Upper lobe of right lung (tissue), 1 donor: ENCODE measurements at regions of chr6 and their contacts with region 1.

Region 1: DNA sequence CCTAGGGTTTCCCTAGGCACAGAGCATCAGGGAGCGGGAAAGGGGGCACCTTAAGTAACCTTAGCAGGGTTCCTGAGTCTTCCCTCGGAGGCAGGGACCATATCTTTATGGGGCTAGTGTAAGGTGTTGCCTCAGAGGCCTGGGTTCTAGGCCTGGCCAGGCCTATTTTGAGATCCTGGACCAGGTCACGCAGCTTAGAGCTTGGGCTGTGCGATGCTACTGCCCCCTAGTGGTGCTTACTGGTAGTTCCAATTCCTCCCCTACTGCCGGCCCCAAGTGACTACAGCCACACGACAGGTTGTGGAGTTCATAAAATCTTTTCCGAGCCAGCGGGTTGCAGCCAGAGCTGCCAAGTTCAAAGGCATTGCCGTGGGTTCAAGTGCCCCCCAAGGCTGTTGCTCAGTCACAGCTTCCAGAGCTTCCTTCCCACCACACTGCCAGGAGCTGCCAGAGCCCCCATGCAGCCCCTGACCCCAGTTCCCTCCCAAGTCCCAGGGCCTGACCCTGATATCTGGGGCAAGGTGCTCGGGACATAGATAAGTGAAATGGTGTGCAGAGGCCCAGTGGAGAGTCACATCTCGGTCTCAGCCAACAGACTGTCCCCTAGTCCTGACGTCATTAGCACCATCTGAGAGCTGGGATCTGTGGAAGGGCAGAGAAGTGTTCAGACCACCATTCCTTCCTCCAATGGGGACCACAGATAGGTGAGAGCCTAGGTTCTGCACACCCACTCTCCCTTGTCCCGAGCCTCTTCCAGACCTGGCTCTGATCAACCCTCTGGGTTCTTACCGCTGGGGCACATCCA is 3.3 kb downstream of the LRRC73 start:
- DNase-seq: peak; percentile 76
- ATAC-seq: peak; percentile 79
- H3K4me3 ChIP-seq: no peak overlapping the region
- H3K27ac ChIP-seq: no peak overlapping the region
- H3K4me1 ChIP-seq: peaks cover 20% of the 10 kb centered on the region
- H3K27me3 ChIP-seq: no peaks in the 10 kb centered on the region
- CTCF ChIP-seq: peak; percentile 98

Region 2: DNA sequence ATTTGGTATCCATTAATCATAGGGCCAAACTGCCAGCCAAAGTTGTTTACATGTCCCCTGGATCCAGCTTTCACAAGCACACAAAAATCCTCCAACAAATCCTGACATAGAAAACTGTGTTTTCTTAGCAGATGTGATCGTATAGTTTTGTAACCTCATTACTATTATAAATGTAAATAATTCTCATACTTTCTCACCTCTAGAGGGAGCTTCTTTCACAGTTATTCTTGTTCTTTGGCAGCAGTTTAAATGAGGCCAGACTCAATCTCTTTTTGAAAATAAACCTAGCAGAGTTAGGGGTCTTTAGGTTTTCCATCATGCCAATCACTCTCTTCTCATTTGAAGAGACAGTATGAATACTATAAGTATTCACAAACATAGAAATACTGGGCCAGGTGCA is 120.4 kb before region 1 on chr6:
- intact Hi-C with region 1: loop called (anchors 10 kb)
- DNase-seq: no peak
- ATAC-seq: peak; percentile 36
- H3K4me3 ChIP-seq: no peak overlapping the region
- H3K27ac ChIP-seq: no peak overlapping the region
- H3K4me1 ChIP-seq: peaks cover 10% of the 10 kb centered on the region
- H3K27me3 ChIP-seq: peaks cover 10% of the 10 kb centered on the region
- CTCF ChIP-seq: peak; percentile 62

Region 3: GRCh38 chr6:43454696-43455530 is 52.0 kb before region 1 on chr6:
- intact Hi-C with region 1: loop called (anchors 10 kb)
- DNase-seq: peak; percentile 92
- ATAC-seq: peak; percentile 94
- H3K4me3 ChIP-seq: peak overlapping the region; percentile 53
- H3K27ac ChIP-seq: no peak overlapping the region
- H3K4me1 ChIP-seq: peaks cover 4% of the 10 kb centered on the region
- H3K27me3 ChIP-seq: peaks cover 24% of the 10 kb centered on the region
- CTCF ChIP-seq: peak; percentile 0